SK-N-SH (cell line): ENCODE measurements at regions of chr19 and their contacts with region 1.

Region 1: DNA sequence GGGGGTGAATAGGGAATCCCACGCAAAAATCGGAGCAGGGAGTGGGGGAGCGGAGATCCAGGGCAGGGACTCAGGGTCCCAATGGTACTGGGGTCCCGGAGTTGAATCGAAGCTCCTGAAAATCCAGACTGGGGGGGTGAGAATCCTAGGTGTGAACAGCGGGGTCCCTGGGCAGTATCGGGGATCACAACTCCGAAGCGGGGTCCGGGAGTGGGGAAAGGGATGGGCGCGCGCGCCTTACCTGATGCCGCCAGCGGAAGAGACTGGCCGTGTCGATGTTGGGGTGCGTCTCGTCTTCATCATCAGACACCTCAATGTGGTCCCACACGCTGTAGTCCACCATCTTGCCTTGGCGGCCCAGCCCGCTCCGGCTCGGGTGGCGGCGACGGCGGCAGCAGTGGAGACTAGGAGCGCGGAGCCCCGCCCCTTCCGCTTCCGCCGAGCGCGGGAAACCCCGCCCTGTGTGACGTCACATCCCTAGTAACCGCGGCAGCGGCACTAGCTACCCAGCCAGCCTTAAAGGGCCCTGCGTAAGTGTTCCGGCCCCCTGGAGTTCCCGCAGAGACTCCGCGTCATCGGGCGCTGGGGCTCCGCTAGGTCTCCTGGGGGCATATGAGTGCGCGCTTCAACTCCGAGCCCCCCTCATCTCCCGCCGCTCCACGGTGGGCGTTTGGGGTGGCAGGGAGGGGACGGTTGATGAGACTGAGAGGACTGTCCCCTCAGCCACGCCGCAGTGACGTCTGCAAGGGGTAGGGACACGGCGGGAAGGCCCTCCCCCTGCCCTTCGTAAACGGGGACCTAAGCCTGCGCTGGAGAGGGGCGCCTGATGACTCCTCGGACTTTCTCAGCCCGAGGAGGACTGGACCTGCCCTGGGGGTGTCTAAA is at the start of gene CDC37:
- DNase-seq: peak; percentile 98
- H3K4me3 ChIP-seq: peak within 1 kb of the TSS; percentile 89 to 98
- H3K27ac ChIP-seq: peak within 1 kb of the TSS; percentile 75 to 80
- H3K4me1 ChIP-seq: peaks cover 9 to 15% of the 10 kb centered on the region in 2 experiments; a peak in 3 of 4 replicates
- H3K27me3 ChIP-seq: no peaks in the 10 kb centered on the region
- CTCF ChIP-seq: no peak
- EP300 ChIP-seq: no peak
- RAD21 ChIP-seq: no peak
- polyA plus RNA-seq, gene CDC37: 1,026 and 1,054 TPM in 2 replicates

Region 2: DNA sequence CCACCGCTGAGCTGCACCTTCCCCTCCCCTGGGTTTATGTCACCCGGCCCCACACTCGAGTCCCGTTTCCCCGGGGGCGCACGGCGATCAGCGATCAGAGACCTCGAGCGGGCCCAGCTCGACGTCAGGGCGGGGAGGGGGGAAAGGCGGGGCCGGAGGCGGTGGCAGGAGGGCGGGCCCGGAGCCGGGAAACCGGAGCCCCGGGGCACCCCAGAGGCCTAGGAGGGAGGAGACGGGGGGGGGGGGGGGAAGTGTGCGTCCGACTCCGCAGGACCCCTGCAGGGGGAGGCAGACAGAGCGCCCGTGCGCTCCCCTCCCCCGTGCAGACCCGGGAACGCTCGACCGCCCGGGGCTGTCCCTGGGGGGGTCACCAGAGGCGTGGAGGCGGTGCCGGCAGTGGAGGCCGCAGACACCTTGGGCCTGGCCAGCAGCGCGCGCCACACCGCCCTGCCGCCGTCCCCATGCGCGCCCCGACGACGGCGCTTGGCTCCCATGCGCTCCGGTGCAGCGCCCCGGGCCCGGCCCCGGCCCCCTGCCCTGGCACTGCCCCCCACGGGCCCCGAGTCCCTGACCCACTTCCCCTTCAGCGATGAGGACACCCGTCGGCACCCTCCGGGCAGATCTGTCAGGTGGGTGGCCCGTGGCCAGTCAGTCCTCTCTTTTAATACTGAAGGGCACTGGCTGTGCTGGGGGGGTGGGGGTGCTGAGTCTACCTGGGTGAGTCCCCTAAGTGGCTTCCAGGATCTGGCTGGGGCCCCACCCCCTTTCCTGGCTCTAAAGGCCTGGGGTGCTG is 28.8 kb after region 1 on chr19:
- CTCF ChIA-PET with region 1: interaction called, 33 read pairs
- POLR2A ChIA-PET with region 1: no interaction called
- DNase-seq: peak; percentile 68
- H3K4me3 ChIP-seq: peak overlapping the region; percentile 44 to 64; a peak in 3 of 4 replicates
- H3K27ac ChIP-seq: no peak overlapping the region
- H3K4me1 ChIP-seq: peaks cover 5 to 7% of the 10 kb centered on the region in 2 experiments; a peak in 2 of 4 replicates
- H3K27me3 ChIP-seq: no peaks in the 10 kb centered on the region
- CTCF ChIP-seq: no peak
- EP300 ChIP-seq: no peak
- RAD21 ChIP-seq: no peak